MCF 10A (cell line): ENCODE measurements at regions of chr11 and their contacts with region 1.

Region 1: DNA sequence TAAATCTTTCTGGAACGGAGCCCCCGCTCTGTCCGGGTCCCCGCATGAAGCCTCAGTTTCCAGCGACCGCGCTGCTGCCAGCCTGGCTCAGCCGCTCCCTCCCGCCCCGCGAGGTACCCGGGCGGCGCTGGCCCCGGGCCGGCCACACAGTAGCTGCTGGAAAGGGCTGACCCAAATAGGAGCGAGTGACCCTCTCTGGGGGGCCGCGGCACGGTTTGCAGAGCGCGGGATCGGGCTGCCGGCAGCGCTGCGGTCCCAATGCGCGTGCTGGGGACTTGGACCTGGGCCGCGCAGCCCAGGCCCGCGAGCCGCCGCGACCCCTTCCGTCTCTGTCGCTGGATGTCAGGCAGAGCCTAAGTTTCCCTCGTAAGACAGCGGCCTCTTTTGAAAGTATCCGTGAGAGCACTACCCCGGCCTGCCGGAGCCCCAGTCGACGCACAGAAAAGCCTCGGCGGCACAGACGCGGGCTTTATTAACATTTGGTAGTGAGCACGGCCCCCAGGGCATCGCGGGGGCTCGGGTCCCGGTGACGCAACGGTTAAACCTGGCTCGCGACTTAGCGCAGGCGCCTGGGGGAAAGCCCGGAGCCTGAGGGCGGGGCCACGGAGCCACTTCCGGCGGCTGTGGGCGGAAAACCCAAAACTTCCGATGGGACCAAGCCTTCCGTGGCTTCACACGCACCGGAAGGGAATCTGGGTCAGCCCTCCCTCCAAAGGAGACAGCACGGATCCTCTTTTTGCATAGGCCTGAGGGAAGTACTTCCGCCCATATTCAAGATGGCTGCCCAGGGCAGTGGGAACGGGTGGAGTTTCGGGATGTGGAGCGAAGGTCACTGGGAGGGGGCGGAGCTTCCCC is 14.9 kb downstream of the BAD start:
- DNase-seq: peak; percentile 100
- H3K4me3 Mint-ChIP-seq: peak overlapping the region; percentile 96
- H3K27ac Mint-ChIP-seq: peak overlapping the region; percentile 96
- H3K4me1 Mint-ChIP-seq: peaks cover 23% of the 10 kb centered on the region
- H3K27me3 Mint-ChIP-seq: no peaks in the 10 kb centered on the region
- CTCF ChIP-seq: peak; percentile 1

Region 2: DNA sequence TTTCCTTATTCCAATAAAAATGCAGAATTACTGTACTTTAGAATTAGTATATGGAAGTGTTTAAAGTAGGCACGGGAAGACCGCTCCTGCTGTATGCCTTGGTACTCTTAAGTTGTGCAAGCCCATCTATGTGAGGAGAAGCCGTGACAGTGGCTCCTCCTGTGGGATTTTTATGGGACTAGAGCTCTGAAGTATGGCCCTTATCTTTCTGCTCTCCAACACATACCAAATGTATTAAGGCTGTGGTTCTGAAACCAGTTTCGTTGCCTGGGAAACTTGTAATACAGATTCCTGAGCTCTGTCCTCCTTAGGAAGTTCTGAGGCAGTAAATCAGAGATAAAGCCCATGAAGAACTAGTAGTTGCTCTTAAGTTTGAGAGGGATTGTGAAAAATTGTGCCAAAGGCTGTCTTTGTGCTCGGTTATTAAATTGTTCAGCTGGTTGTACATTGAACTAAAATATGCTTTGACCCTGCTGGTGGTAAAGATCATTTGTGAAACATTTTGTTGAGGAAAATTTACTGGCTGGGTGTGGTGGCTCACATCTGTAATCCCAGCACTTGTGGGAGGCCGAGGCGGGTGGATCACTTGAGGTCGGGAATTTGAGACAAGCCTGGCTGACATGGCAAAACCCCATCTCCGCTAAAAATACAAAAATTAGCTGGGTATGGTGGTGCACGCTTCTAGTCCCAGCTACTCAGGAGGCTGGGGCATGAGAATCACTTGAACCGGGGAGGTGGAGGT is 559.0 kb before region 1 on chr11:
- CTCF ChIA-PET with region 1: no interaction called
- POLR2A ChIA-PET with region 1: no interaction called
- intact Hi-C with region 1: no loop called
- DNase-seq: no peak
- H3K4me3 Mint-ChIP-seq: no peak overlapping the region
- H3K27ac Mint-ChIP-seq: no peak overlapping the region
- H3K4me1 Mint-ChIP-seq: peaks cover 13% of the 10 kb centered on the region
- H3K27me3 Mint-ChIP-seq: no peaks in the 10 kb centered on the region
- CTCF ChIP-seq: no peak

Region 3: DNA sequence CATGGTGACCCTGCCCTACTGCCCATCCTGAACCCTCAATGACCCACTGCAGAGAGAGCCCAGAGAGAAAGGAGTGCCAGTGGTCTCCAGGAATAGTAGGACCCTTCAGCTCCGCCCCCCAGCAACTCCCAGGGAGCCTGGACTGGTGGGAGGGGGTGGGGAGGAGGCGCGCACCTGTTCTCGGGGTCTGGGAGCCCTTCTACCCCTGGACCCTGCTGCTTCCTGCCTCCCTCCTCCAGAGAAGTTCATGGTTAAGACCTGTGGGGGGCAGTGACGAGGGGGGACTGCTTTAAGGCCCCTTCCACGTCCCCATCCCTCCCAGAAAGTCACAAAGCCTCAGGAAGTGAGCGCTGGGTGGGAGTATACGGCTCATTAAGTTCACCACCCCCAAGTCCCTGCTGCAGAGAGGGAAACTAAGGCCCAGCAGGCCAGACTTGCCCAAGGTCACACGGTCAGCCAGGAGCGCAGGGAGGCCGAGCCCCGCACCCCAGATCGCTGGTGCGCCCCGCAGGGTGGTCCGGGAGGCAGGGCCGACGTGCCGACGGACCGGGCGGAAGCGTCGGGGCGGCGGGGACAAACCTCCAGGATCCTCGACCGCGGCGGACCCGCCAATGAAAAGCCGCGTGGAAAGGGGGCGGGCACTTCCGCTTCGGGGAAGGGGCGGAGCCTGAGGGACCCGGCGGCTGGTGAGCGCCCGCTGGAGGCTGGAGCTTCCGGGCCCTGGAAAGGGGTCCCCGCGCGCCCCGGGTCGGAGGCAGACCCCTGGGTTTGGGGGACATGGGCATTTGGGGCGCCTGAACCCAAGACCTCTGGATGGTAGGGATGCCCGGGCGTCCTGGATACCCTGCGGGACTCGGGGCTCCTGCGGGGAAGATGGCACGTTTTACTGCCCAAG is 43.7 kb before region 1 on chr11 and contains the starts of genes NUDT22 and TRPT1:
- CTCF ChIA-PET with region 1: interaction called, 3 read pairs
- POLR2A ChIA-PET with region 1: interaction called, 24 read pairs
- intact Hi-C with region 1: no loop called
- DNase-seq: peak; percentile 79
- H3K4me3 Mint-ChIP-seq: peak within 1 kb of the TSS; percentile 80
- H3K27ac Mint-ChIP-seq: peak within 1 kb of the TSS; percentile 80
- H3K4me1 Mint-ChIP-seq: peaks cover 8% of the 10 kb centered on the region
- H3K27me3 Mint-ChIP-seq: no peaks in the 10 kb centered on the region
- CTCF ChIP-seq: peak; percentile 31
- total RNA-seq, gene NUDT22: 51.0 and 73.6 TPM in 2 replicates
- total RNA-seq, gene TRPT1: 27.0 and 31.3 TPM in 2 replicates

Region 4: DNA sequence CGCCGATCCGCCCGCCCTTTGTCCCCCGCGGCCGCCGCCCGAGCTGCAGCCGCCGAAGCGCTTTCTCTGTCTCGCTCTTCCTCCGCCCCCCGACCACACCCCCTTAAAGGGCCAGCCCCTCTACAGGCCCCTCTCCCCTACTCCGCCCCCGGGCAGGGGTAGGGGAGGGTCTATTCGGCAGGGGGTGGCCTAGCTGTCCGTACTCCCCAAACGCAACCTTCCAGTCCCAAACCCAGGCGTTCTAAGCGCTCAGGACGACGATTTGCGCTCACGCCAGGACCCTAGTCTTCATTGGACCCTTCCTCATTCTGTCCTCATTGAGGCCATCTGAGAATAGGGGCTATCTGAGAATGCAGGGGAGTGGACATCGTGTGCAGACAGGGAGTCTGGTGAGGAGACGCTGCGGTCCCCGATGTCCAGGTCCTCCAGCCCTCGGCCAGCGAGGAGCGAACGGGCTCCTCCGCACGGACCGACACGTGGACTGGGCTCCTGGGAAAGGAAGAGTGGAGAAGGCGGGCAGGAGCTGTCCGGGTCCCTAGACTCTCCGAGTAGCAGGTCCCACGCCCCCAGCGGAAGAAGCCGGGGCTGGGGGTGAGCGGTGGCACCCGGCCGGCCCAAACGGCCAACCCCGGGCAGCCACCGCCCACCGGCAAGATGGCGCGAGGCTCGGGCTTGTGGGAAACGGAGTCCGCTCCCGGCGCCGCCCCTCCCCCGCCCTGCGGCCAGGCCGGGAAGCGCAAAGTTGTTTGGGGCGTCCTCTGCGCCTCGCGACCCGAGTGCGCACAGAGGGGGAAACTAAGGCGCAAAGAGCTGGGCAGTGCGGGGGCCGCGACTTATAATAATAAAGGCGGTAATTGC is 22.5 kb before region 1 on chr11 and contains the start of gene PPP1R14B:
- CTCF ChIA-PET with region 1: interaction called, 36 read pairs
- POLR2A ChIA-PET with region 1: interaction called, 75 read pairs
- intact Hi-C with region 1: loop called (anchors 1 kb)
- DNase-seq: peak; percentile 86
- H3K4me3 Mint-ChIP-seq: peak within 1 kb of the TSS; percentile 93
- H3K27ac Mint-ChIP-seq: peak within 1 kb of the TSS; percentile 69
- H3K4me1 Mint-ChIP-seq: peaks cover 15% of the 10 kb centered on the region
- H3K27me3 Mint-ChIP-seq: no peaks in the 10 kb centered on the region
- CTCF ChIP-seq: no peak
- total RNA-seq, gene PPP1R14B: 583 and 684 TPM in 2 replicates

Region 5: GRCh38 chr11:64284048-64284961 is 14.7 kb after region 1 on chr11 and contains the start of gene BAD:
- CTCF ChIA-PET with region 1: interaction called, 8 read pairs
- POLR2A ChIA-PET with region 1: interaction called, 125 read pairs
- intact Hi-C with region 1: no loop called
- DNase-seq: peak; percentile 94
- H3K4me3 Mint-ChIP-seq: peak within 1 kb of the TSS; percentile 76
- H3K27ac Mint-ChIP-seq: peak within 1 kb of the TSS; percentile 84
- H3K4me1 Mint-ChIP-seq: peaks cover 10% of the 10 kb centered on the region
- H3K27me3 Mint-ChIP-seq: no peaks in the 10 kb centered on the region
- CTCF ChIP-seq: no peak
- total RNA-seq, gene BAD: 67.4 and 79.7 TPM in 2 replicates

Region 6: GRCh38 chr11:64317957-64318693 is 48.5 kb after region 1 on chr11 and contains the start of gene PRDX5:
- CTCF ChIA-PET with region 1: interaction called, 3 read pairs
- POLR2A ChIA-PET with region 1: interaction called, 42 read pairs
- intact Hi-C with region 1: no loop called
- DNase-seq: peak; percentile 96
- H3K4me3 Mint-ChIP-seq: peak within 1 kb of the TSS; percentile 86
- H3K27ac Mint-ChIP-seq: peak within 1 kb of the TSS; percentile 93
- H3K4me1 Mint-ChIP-seq: peaks cover 36% of the 10 kb centered on the region
- H3K27me3 Mint-ChIP-seq: no peaks in the 10 kb centered on the region
- CTCF ChIP-seq: no peak
- total RNA-seq, gene PRDX5: 274 and 302 TPM in 2 replicates

Region 7: GRCh38 chr11:64358907-64359711 is 89.5 kb after region 1 on chr11 and contains the start of gene RPS6KA4:
- CTCF ChIA-PET with region 1: interaction called, 7 read pairs
- POLR2A ChIA-PET with region 1: interaction called, 11 read pairs
- intact Hi-C with region 1: no loop called
- DNase-seq: peak; percentile 58
- H3K4me3 Mint-ChIP-seq: peak within 1 kb of the TSS; percentile 82
- H3K27ac Mint-ChIP-seq: peak within 1 kb of the TSS; percentile 8
- H3K4me1 Mint-ChIP-seq: peaks cover 35% of the 10 kb centered on the region
- H3K27me3 Mint-ChIP-seq: no peaks in the 10 kb centered on the region
- CTCF ChIP-seq: no peak
- total RNA-seq, gene RPS6KA4: 42.5 and 46.5 TPM in 2 replicates

Region 8: DNA sequence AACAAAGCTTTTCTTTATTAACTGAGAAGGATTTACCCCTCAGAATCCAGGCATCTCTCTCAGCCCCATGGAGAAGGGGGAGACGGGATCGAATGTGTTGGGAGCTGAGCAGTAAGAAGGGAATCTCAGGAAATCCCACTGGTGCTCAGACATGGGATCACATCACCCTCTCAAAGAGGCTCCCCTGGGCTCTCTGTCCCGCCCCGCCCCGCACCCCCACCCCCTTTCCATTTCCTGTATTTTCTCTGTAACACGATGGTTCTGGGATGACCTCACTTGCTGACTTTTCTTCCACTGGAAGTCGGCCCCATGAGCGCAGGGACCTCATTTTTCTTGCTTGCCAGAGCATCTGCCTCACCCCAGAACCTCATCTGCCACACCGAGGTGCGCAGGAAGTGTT is 189.4 kb after region 1 on chr11:
- CTCF ChIA-PET with region 1: no interaction called
- POLR2A ChIA-PET with region 1: no interaction called
- intact Hi-C with region 1: no loop called
- DNase-seq: no peak
- H3K4me3 Mint-ChIP-seq: no peak overlapping the region
- H3K27ac Mint-ChIP-seq: no peak overlapping the region
- H3K4me1 Mint-ChIP-seq: peaks cover 2% of the 10 kb centered on the region
- H3K27me3 Mint-ChIP-seq: no peaks in the 10 kb centered on the region
- CTCF ChIP-seq: no peak